ENCODE measurements at regions of chr17 and their contacts with region 1.

Region 1: DNA sequence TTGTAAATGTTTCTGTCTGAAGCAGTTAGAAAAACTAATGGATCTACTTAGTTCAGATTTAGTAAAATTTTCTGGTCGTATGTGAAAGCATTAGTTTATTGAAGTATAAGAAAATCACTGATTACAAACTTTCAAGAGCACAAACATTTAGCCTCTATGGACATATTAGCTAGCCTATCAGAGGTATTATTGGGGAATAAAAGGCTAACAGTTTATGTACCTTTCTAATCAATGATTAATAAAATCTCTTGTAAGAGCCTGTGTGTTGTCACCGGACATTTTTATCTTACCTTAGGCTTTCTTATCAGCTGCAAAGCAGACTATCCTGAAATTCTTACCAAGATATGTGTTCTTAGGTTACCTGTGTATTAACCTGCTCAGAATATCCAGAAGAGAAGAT is 21.2 kb downstream of the ZPBP2 start:
- DNase-seq: no peak
- H3K4me3 ChIP-seq: no peak overlapping the region
- H3K27ac ChIP-seq: no peak overlapping the region
- H3K4me1 ChIP-seq: peaks cover 0 to 3% (median 0%) of the 10 kb centered on the region in 6 donors
- H3K27me3 ChIP-seq: peaks cover 0 to 9% (median 0%) of the 10 kb centered on the region in 7 donors
- CTCF ChIP-seq: no peak
- POLR2A ChIP-seq: no peak

Region 2: GRCh38 chr17:39963829-39964228 is 74.6 kb after region 1 on chr17:
- intact Hi-C with region 1: loop called (anchors 10 kb)
- DNase-seq: no peak
- H3K4me3 ChIP-seq: no peak overlapping the region
- H3K27ac ChIP-seq: no peak overlapping the region
- H3K4me1 ChIP-seq: peaks cover 0 to 33% (median 7%) of the 10 kb centered on the region in 6 donors
- H3K27me3 ChIP-seq: no peaks in the 10 kb centered on the region
- CTCF ChIP-seq: no peak
- POLR2A ChIP-seq: no peak